Dendritic cell treated with granulocyte-macrophage colony-stimulating factor and Interleukin-4, amounts not matched to agents 40 ng/mL and 50 ng/mL, for 4 days (primary cell): ENCODE measurements at regions of chr9 and their contacts with region 1.

Region 1: GRCh38 chr9:27599102-27599869 is 26.0 kb upstream of the C9orf72 start:
- H3K4me3 Mint-ChIP-seq: peak overlapping the region; percentile 61
- H3K27ac Mint-ChIP-seq: peak overlapping the region; percentile 92
- H3K4me1 Mint-ChIP-seq: peaks cover 68% of the 10 kb centered on the region
- H3K27me3 Mint-ChIP-seq: no peaks in the 10 kb centered on the region

Region 2: DNA sequence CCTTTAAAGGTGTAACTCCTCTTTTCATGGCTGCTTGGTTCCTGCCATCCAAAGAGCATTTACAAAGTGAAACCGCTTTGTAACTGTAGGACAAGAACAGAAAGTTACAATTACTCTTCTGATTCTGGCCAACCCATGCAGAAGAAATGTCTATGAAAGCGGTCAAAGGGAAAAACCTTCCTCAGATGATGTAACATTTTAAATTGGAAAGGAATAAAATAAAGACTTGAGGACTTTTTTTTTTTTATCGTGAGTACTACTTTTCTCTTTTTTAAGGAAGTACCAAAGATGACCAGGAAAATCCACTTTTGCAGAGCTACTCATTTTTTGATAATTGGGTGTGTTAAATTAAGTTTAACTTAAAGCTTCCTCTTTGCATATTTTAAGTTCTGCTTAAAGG is 13.0 kb before region 1 on chr9:
- intact Hi-C with region 1: loop called (anchors 1 kb)
- H3K4me3 Mint-ChIP-seq: peak overlapping the region; percentile 50
- H3K27ac Mint-ChIP-seq: peak overlapping the region; percentile 90
- H3K4me1 Mint-ChIP-seq: peaks cover 63% of the 10 kb centered on the region
- H3K27me3 Mint-ChIP-seq: no peaks in the 10 kb centered on the region